ENCODE measurements at regions of chr12 and their contacts with region 1.

Region 1: DNA sequence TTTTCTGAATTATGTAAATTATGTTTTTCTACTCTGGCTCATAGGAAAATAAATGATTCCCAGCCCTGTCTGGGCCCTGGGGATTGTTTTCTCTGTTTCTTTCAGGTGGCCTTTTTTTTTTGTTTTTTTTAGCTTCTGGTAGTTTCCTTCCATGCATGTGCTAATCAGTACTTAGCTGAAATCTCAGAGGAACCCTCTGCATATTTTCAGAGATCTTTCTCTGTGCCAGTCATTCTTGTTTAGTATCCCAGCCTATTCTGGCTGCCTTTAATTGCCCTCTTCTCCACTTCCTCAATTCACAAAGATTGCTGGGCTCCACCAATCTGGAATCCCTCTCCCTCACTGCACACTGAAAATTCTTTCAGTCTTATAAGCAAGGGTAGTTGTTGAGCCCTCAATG is 46.9 kb downstream of the CNOT2 start:
- DNase-seq: no peak
- ATAC-seq: no peak
- H3K4me3 ChIP-seq: no peak overlapping the region
- H3K4me3 Mint-ChIP-seq: no peak overlapping the region
- H3K27ac ChIP-seq: no peak overlapping the region
- H3K27ac Mint-ChIP-seq: no peak overlapping the region
- H3K4me1 ChIP-seq: peaks cover 11% of the 10 kb centered on the region
- H3K4me1 Mint-ChIP-seq: peaks cover 67% of the 10 kb centered on the region
- H3K27me3 ChIP-seq: no peaks in the 10 kb centered on the region
- H3K27me3 Mint-ChIP-seq: no peaks in the 10 kb centered on the region
- CTCF ChIP-seq: no peak

Region 2: GRCh38 chr12:70248876-70249275 is 41.2 kb before region 1 on chr12:
- CTCF ChIA-PET with region 1: no interaction called
- POLR2A ChIA-PET with region 1: no interaction called
- intact Hi-C with region 1: loop called in 1 of 2 experiments (anchors 2 kb)
- DNase-seq: no peak
- ATAC-seq: no peak
- H3K4me3 ChIP-seq: no peak overlapping the region
- H3K4me3 Mint-ChIP-seq: no peak overlapping the region
- H3K27ac ChIP-seq: no peak overlapping the region
- H3K27ac Mint-ChIP-seq: no peak overlapping the region
- H3K4me1 ChIP-seq: peaks cover 71% of the 10 kb centered on the region
- H3K4me1 Mint-ChIP-seq: peaks cover 90% of the 10 kb centered on the region
- H3K27me3 ChIP-seq: no peaks in the 10 kb centered on the region
- H3K27me3 Mint-ChIP-seq: no peaks in the 10 kb centered on the region
- CTCF ChIP-seq: no peak

Region 3: GRCh38 chr12:70255311-70255710 is 34.8 kb before region 1 on chr12:
- CTCF ChIA-PET with region 1: no interaction called
- POLR2A ChIA-PET with region 1: no interaction called
- intact Hi-C with region 1: loop called (anchors 2 to 5 kb)
- DNase-seq: no peak
- ATAC-seq: no peak
- H3K4me3 ChIP-seq: no peak overlapping the region
- H3K4me3 Mint-ChIP-seq: peak overlapping the region; percentile 33
- H3K27ac ChIP-seq: no peak overlapping the region
- H3K27ac Mint-ChIP-seq: peak overlapping the region; percentile 43
- H3K4me1 ChIP-seq: peaks cover 47% of the 10 kb centered on the region
- H3K4me1 Mint-ChIP-seq: peaks cover 88% of the 10 kb centered on the region
- H3K27me3 ChIP-seq: no peaks in the 10 kb centered on the region
- H3K27me3 Mint-ChIP-seq: no peaks in the 10 kb centered on the region
- CTCF ChIP-seq: no peak

Region 4: DNA sequence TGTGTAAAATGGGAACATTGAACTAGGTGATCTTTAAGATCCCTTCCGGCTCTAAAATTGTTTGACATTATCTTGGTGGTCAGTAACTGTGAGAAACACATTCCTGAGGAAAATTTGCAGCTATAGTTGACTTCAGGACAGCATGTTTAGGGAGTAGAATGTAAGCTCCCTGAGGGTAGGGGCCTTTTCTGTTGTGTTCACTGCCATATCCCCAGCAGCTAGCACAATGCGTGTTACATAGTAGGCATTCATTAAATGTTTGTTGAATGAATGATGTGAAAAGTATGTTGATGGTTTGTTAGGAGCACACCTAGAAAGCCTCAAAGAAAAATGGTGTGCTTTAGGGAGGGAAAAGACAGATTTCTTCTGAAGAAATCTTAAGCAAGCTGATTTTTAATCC is 37.4 kb after region 1 on chr12:
- CTCF ChIA-PET with region 1: no interaction called
- POLR2A ChIA-PET with region 1: no interaction called
- intact Hi-C with region 1: loop called in 1 of 2 experiments (anchors 5 kb)
- DNase-seq: no peak
- ATAC-seq: no peak
- H3K4me3 ChIP-seq: no peak overlapping the region
- H3K4me3 Mint-ChIP-seq: no peak overlapping the region
- H3K27ac ChIP-seq: no peak overlapping the region
- H3K27ac Mint-ChIP-seq: no peak overlapping the region
- H3K4me1 ChIP-seq: no peaks in the 10 kb centered on the region
- H3K4me1 Mint-ChIP-seq: peaks cover 43% of the 10 kb centered on the region
- H3K27me3 ChIP-seq: no peaks in the 10 kb centered on the region
- H3K27me3 Mint-ChIP-seq: no peaks in the 10 kb centered on the region
- CTCF ChIP-seq: no peak

Measured in CD8-positive, alpha-beta T cell (primary cell).